ENCODE measurements at regions of chr1 and their contacts with region 1.

Region 1: GRCh38 chr1:212035123-212035834 is at the starts of genes DTL and INTS7:
- DNase-seq: peak; percentile 100
- H3K4me3 Mint-ChIP-seq: peak within 1 kb of the TSS; percentile 88
- H3K27ac Mint-ChIP-seq: peak within 1 kb of the TSS; percentile 89
- H3K4me1 Mint-ChIP-seq: peaks cover 65% of the 10 kb centered on the region
- H3K27me3 Mint-ChIP-seq: no peaks in the 10 kb centered on the region
- CTCF ChIP-seq: peak; percentile 99
- total RNA-seq, gene DTL: 20.2 and 34.4 TPM in 2 replicates
- total RNA-seq, gene INTS7: 50.0 and 62.3 TPM in 2 replicates

Region 2: GRCh38 chr1:211578640-211579433 is 456.4 kb before region 1 on chr1 and contains the start of gene SLC30A1:
- CTCF ChIA-PET with region 1: interaction called, 4 read pairs
- POLR2A ChIA-PET with region 1: interaction called, 14 read pairs
- intact Hi-C with region 1: no loop called
- DNase-seq: peak; percentile 100
- H3K4me3 Mint-ChIP-seq: peak within 1 kb of the TSS; percentile 89
- H3K27ac Mint-ChIP-seq: peak within 1 kb of the TSS; percentile 96
- H3K4me1 Mint-ChIP-seq: peaks cover 48% of the 10 kb centered on the region
- H3K27me3 Mint-ChIP-seq: no peaks in the 10 kb centered on the region
- CTCF ChIP-seq: no peak
- total RNA-seq, gene SLC30A1: 87.0 and 94.1 TPM in 2 replicates

Region 3: DNA sequence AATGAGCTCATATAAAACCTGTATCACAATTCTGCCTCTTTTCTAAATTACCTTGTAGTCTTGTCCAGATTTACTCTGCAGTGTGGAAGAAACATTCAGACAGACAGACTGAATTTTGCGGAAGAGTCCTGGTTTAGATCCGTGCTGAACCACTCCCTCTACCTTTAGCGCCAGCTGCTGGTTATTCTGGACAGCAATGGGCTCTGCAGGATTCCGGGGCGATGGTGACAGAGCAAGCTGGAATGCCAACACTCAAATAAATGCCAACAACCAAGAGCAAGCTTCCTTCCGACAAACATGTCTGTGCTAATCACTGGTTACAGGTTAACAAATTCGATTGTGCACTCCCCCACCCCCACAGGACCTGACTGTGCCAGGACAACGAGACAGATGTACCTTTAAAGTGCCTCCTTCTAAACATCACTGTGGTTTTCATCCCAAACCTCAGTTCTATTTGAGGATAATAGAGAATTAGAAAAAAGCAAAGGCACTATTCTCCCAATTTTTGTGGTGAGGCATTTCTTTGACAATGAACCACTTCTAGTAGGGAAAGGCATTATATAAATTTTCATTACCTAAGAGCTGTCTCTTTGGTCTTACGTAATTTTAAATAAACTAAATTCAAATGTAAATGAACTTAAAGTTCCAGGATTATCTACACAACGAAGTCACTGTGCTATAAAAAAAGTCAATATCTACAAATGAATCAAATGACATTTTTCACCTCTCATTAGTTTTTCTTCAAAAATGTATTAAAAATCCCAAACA is 90.4 kb before region 1 on chr1:
- CTCF ChIA-PET with region 1: interaction called, 20 read pairs
- POLR2A ChIA-PET with region 1: interaction called, 16 read pairs
- intact Hi-C with region 1: loop called (anchors 2 kb)
- DNase-seq: peak; percentile 96
- H3K4me3 Mint-ChIP-seq: peak overlapping the region; percentile 3
- H3K27ac Mint-ChIP-seq: peak overlapping the region; percentile 21
- H3K4me1 Mint-ChIP-seq: peaks cover 14% of the 10 kb centered on the region
- H3K27me3 Mint-ChIP-seq: no peaks in the 10 kb centered on the region
- CTCF ChIP-seq: peak; percentile 96

Region 4: GRCh38 chr1:212012034-212012740 is 23.1 kb before region 1 on chr1:
- CTCF ChIA-PET with region 1: interaction called, 332 read pairs
- POLR2A ChIA-PET with region 1: interaction called, 385 read pairs
- intact Hi-C with region 1: loop called (anchors 1 kb)
- DNase-seq: peak; percentile 95
- H3K4me3 Mint-ChIP-seq: no peak overlapping the region
- H3K27ac Mint-ChIP-seq: no peak overlapping the region
- H3K4me1 Mint-ChIP-seq: no peaks in the 10 kb centered on the region
- H3K27me3 Mint-ChIP-seq: no peaks in the 10 kb centered on the region
- CTCF ChIP-seq: peak; percentile 100

Region 5: DNA sequence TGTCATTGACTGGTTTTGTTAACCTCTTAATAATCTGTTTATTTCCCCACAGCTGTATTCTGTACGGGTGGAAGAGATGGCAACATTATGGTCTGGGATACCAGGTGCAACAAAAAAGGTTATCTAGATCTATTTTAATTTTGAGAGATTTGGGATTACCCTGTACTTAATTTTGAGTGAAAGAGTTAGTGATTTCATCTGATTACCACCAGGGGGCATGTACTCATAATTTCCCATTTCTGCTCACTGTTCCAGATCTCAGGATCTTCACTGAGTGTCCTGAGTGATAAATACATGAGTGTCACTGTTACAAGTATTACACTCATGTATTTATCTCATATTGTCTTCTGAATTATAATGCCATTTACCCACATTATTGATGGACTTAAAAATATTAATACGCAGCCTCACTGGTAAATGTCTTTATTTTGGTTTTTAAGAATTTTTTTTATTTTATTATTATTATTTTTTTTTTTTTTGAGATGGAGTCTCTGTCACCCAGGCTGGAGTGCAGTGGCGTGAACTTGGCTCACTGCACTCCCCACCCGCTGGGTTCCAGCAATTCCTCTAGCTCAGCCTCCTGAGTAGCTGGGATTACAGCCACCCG is 27.7 kb after region 1 on chr1:
- CTCF ChIA-PET with region 1: interaction called, 59 read pairs
- POLR2A ChIA-PET with region 1: interaction called, 13 read pairs
- intact Hi-C with region 1: no loop called
- DNase-seq: peak; percentile 73
- H3K4me3 Mint-ChIP-seq: no peak overlapping the region
- H3K27ac Mint-ChIP-seq: no peak overlapping the region
- H3K4me1 Mint-ChIP-seq: peaks cover 12% of the 10 kb centered on the region
- H3K27me3 Mint-ChIP-seq: no peaks in the 10 kb centered on the region
- CTCF ChIP-seq: peak; percentile 84

Region 6: GRCh38 chr1:212162635-212163034 is 127.4 kb after region 1 on chr1:
- CTCF ChIA-PET with region 1: no interaction called
- POLR2A ChIA-PET with region 1: no interaction called
- intact Hi-C with region 1: no loop called
- DNase-seq: peak; percentile 88
- H3K4me3 Mint-ChIP-seq: no peak overlapping the region
- H3K27ac Mint-ChIP-seq: no peak overlapping the region
- H3K4me1 Mint-ChIP-seq: peaks cover 13% of the 10 kb centered on the region
- H3K27me3 Mint-ChIP-seq: no peaks in the 10 kb centered on the region
- CTCF ChIP-seq: no peak

Region 7: DNA sequence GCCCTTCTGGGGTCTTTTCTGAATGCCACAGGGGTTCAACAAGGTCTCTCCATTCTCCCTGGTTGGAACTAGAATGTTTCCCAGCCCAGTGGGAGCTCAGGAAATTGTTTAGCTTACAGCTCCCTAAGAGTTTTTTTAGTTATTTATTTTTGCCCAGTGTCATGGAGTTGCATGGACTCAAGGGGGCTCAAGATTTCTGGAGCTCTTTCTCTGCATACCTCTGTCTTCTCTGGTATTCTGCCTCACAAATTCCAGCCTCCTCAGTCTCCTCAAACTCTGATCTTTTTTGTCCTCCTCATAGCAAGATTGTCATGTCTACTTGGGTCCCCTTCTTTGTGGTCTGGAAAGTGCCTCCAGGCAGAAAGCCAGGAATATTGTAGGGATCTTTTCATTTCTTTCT is 234.0 kb after region 1 on chr1:
- CTCF ChIA-PET with region 1: no interaction called
- POLR2A ChIA-PET with region 1: no interaction called
- intact Hi-C with region 1: no loop called
- DNase-seq: no peak
- H3K4me3 Mint-ChIP-seq: no peak overlapping the region
- H3K27ac Mint-ChIP-seq: no peak overlapping the region
- H3K4me1 Mint-ChIP-seq: no peaks in the 10 kb centered on the region
- H3K27me3 Mint-ChIP-seq: no peaks in the 10 kb centered on the region
- CTCF ChIP-seq: no peak

Region 8: DNA sequence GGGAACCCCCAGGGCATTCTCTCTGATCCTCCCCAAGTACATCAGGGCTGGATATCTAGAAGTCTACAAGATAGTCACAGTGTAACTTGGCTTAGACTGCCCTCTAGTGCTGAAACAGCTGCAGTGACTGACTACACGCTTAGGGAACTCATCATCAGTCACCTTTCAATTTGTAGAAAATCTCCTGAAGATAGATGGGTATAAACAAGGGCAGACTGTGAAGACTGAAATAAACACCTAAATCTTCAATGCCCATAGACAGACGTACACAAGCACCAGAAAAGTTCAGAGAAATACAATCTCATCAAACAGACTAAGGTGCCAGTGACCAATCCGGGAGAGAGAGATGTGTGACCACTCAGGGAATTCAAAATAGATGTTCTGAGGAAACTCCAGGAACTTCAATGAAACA is 332.8 kb after region 1 on chr1:
- CTCF ChIA-PET with region 1: interaction called, 18 read pairs
- POLR2A ChIA-PET with region 1: interaction called, 6 read pairs
- intact Hi-C with region 1: loop called (anchors 1 kb)
- DNase-seq: peak; percentile 93
- H3K4me3 Mint-ChIP-seq: no peak overlapping the region
- H3K27ac Mint-ChIP-seq: peak overlapping the region; percentile 5
- H3K4me1 Mint-ChIP-seq: peaks cover 15% of the 10 kb centered on the region
- H3K27me3 Mint-ChIP-seq: no peaks in the 10 kb centered on the region
- CTCF ChIP-seq: peak; percentile 99

Region 9: DNA sequence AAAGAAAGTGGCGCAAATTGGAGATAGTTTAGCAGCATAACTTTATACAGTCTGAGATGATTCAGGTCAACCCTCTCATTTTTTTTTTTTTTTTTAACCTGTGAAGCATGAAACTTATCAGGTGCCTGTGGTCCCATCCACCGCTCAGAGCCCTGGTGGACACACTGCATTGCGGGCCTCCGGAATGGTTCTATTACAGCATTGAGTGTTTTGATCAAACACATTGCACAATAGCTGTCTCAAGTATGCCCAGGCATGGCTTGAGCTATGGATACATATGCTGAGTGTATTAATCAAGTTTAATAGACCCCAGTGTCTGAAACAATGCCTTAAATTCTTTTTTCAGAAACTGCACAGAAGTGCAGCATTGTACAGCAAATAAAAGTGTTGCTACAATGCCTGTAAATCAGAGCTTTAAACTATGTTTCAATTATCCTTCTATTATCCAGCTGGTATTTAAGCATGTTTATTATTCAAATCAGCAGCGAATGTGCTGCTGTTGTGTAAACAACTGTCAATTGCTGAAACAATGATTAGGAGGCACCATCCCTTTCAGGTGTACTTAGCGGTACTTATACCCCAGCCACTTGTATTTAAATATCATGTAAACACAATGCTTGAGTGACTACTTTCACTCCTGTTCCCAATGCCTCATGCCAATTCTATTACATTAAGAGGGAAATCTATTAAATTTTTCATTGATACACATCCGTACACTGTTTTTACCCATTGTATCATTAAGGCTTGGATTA is 1472.4 kb after region 1 on chr1:
- CTCF ChIA-PET with region 1: no interaction called
- POLR2A ChIA-PET with region 1: no interaction called
- intact Hi-C with region 1: no loop called
- DNase-seq: no peak
- H3K4me3 Mint-ChIP-seq: no peak overlapping the region
- H3K27ac Mint-ChIP-seq: no peak overlapping the region
- H3K4me1 Mint-ChIP-seq: no peaks in the 10 kb centered on the region
- H3K27me3 Mint-ChIP-seq: no peaks in the 10 kb centered on the region
- CTCF ChIP-seq: no peak

Measured in MCF 10A (cell line).